Endothelial cell of umbilical vein (primary cell): ENCODE measurements at regions of chr10 and their contacts with region 1.

Region 1: DNA sequence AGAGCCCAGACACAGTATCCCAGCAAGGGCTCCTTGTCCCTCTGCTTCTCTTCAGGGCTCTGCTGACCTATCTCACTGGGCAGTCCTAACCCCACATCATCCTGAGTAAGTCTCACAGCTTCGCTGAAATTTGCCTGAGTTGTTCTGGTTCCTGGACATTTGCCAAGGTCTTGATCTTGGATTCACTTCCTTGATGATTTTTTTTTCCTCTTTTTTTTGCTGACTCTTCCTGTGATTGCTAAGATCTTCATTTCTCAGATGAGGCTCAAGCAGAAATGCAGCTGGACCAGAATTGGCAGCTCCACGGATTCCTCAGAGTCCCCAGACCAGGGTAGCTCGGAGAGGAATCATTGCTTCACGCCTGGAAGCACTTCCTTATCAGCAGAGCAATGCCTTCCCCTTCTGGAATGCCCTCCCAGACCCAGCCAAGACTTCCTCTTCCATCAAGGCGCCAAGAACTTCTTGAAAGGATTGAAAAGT is 8.6 kb upstream of the AFAP1L2 start:
- DNase-seq: peak; percentile 70
- H3K4me3 ChIP-seq: no peak overlapping the region
- H3K27ac ChIP-seq: no peak overlapping the region
- H3K4me1 ChIP-seq: peaks cover 10% of the 10 kb centered on the region
- H3K27me3 ChIP-seq: peaks cover 11 to 20% of the 10 kb centered on the region in 2 experiments
- CTCF ChIP-seq: no peak
- POLR2A ChIP-seq: no peak

Region 2: GRCh38 chr10:114397651-114398145 is 15.2 kb before region 1 on chr10:
- CTCF ChIA-PET with region 1: interaction called, 5 read pairs
- POLR2A ChIA-PET with region 1: no interaction called
- dilution Hi-C with region 1: no loop called
- intact Hi-C with region 1: loop called (anchors 2 kb)
- DNase-seq: no peak
- H3K4me3 ChIP-seq: no peak overlapping the region
- H3K27ac ChIP-seq: no peak overlapping the region
- H3K4me1 ChIP-seq: peaks cover 9% of the 10 kb centered on the region
- H3K27me3 ChIP-seq: peaks cover 84 to 88% of the 10 kb centered on the region in 2 experiments
- CTCF ChIP-seq: no peak
- POLR2A ChIP-seq: no peak

Region 3: DNA sequence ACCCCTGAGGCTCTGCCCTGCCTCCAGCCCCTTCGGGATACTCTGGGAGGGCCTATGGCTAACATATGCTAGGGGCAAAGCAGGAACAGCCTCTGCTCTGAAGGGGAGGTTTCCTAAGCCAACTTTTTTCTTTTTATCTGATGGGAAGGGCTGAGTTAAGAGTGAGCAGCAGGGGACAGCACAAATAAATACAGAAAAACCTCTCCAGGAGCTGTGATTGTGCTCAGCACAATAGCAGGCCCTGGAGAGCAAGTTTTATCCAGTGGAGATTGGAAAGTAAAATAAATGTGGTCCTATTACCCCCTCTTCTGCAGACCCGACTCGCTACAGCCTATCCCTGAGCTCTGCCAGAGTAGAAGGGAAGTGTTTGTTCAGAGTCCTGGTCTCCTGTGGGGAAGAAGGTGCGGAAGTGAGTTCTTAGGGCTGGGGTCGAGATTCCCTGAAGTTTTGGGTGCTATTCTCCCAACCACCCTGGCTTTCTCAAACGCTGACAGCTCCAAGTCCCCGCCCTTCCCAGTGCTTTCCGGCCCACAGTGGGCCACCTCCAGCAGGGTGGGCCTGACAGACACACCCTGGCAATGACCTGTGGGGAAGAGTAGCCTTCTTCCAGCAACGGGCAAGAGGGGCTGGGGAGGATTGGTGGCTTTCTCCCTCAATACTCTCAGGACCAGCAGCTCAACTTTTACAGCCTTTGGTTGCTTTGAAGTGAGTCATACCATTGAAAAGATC is 14.3 kb after region 1 on chr10:
- CTCF ChIA-PET with region 1: interaction called, 11 read pairs
- POLR2A ChIA-PET with region 1: no interaction called
- dilution Hi-C with region 1: no loop called
- intact Hi-C with region 1: no loop called
- DNase-seq: peak; percentile 65
- H3K4me3 ChIP-seq: no peak overlapping the region
- H3K27ac ChIP-seq: no peak overlapping the region
- H3K4me1 ChIP-seq: peaks cover 13% of the 10 kb centered on the region
- H3K27me3 ChIP-seq: peaks cover 0 to 4% of the 10 kb centered on the region in 2 experiments
- CTCF ChIP-seq: no peak
- POLR2A ChIP-seq: no peak